ENCODE measurements at regions of chr4 and their contacts with region 1.

Region 1: DNA sequence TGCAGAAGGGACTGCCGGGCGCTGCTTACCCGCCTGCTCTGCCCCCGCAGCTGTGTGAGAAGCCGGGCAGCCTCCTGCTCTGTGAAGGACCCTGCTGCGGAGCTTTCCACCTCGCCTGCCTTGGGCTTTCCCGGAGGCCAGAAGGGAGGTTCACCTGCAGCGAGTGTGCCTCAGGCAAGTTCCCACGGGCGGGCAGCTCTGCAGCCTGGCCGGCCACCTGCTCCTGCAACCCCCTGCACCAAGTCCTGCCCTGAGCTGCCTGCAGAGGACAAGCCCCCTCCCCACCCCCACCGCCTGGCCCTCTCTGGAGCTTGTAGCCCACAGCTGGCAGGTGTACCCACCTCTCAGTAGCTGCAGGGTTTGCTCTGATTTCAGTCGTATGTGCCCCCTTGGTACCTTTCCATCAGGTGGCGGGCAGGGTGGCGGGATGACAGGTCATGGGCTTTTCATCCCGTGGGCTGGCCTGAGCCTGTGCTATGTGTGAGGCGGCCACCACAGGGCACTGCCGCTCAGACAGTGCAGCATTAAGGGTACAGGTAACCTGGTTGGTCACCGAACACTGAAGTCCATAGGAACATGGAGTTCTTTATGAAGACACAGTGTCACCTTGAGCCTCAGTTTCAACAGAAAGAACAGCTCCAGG is 56.6 kb downstream of the NELFA start:
- DNase-seq: no peak
- ATAC-seq: peak; percentile 15; the same call in 2 of the 3 replicates
- H3K4me3 ChIP-seq: no peak overlapping the region
- H3K27ac ChIP-seq: no peak overlapping the region
- H3K4me1 ChIP-seq: no peaks in the 10 kb centered on the region
- H3K27me3 ChIP-seq: no peaks in the 10 kb centered on the region
- CTCF ChIP-seq: no peak
- EP300 ChIP-seq: no peak
- POLR2A ChIP-seq: no peak
- RAD21 ChIP-seq: no peak

Region 2: DNA sequence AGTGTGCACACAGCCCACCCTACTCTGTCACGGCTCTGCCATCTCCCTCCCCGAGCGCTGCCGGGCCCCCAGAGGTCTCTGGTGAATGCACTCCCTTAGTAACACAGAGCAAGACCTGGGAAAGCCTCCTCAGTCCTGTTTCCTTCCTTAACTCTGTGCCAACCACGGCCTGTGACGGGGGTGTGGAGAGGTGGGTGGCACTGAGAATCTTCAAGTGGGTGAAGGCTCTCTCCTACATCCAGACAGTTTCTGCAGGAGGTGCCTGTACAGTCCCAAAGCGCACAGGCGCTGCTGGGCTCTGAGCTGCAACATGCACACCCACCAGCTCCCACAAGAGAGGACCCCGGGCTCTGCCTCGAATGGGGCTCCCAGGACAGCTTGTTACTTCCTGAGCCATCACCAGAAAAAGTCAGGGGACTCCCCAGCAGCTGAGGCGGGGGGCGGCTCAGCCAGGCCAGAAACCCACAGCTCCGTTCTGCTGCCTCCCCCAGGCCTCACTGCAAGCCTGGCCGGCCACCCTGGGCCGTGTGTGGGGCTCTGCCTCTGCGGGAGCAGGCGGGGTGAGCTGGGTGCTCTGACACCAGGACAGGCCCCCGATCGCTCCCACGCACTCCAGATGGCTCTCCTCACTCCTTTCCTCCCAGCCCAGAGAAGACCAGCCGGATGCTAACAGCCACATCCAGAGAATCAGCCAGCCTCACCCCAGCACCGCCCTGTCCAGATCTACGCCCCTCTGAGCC is 297.8 kb before region 1 on chr4:
- CTCF ChIA-PET with region 1: no interaction called
- POLR2A ChIA-PET with region 1: no interaction called
- in situ Hi-C with region 1: no loop called
- intact Hi-C with region 1: no loop called
- DNase-seq: no peak
- ATAC-seq: no peak; the same call in 2 of the 3 replicates
- H3K4me3 ChIP-seq: no peak overlapping the region
- H3K27ac ChIP-seq: no peak overlapping the region
- H3K4me1 ChIP-seq: no peaks in the 10 kb centered on the region
- H3K27me3 ChIP-seq: no peaks in the 10 kb centered on the region
- CTCF ChIP-seq: no peak
- EP300 ChIP-seq: no peak
- POLR2A ChIP-seq: no peak
- RAD21 ChIP-seq: no peak

Region 3: GRCh38 chr4:2324891-2325290 is 372.7 kb after region 1 on chr4:
- CTCF ChIA-PET with region 1: no interaction called
- POLR2A ChIA-PET with region 1: no interaction called
- in situ Hi-C with region 1: no loop called
- intact Hi-C with region 1: loop called (anchors 5 kb)
- DNase-seq: no peak
- ATAC-seq: no peak
- H3K4me3 ChIP-seq: no peak overlapping the region
- H3K27ac ChIP-seq: no peak overlapping the region
- H3K4me1 ChIP-seq: no peaks in the 10 kb centered on the region
- H3K27me3 ChIP-seq: peaks cover 3 to 22% of the 10 kb centered on the region in 2 experiments; a peak in 4 of 5 replicates
- CTCF ChIP-seq: no peak
- EP300 ChIP-seq: no peak
- POLR2A ChIP-seq: no peak
- RAD21 ChIP-seq: no peak